ENCODE measurements at regions of chr2 and their contacts with region 1.

Region 1: GRCh38 chr2:96138179-96139145 is at the start of gene ASTL:
- DNase-seq: peak; percentile 57
- H3K4me3 ChIP-seq: no peak within 1 kb of the TSS
- H3K27ac ChIP-seq: no peak within 1 kb of the TSS
- H3K4me1 ChIP-seq: no peaks in the 10 kb centered on the region
- H3K27me3 ChIP-seq: no peaks in the 10 kb centered on the region
- CTCF ChIP-seq: peak; percentile 68
- total RNA-seq, gene ASTL: not detected in 2 replicates

Region 2: DNA sequence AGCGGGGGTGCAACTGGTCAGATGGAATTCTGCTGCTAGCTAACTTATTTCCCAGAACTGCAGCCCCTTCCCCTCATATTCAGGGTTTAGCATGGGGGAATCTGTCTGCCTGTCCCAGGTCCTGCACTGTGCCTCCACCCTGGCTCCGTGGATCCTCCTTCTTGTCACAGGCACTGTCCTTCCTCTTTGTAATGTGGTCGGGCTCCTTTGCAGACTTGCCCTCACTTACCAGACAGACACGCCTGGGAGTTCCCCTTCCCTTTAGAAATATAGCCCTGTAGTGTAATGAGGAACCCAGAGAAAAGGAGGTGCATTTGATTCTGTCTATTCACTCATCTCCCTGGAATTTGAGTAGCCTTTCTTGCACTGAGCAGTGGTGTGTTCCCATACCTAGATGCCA is 437.9 kb before region 1 on chr2:
- CTCF ChIA-PET with region 1: no interaction called
- POLR2A ChIA-PET with region 1: no interaction called
- intact Hi-C with region 1: no loop called
- DNase-seq: no peak
- H3K4me3 ChIP-seq: no peak overlapping the region
- H3K27ac ChIP-seq: no peak overlapping the region
- H3K4me1 ChIP-seq: no peaks in the 10 kb centered on the region
- H3K27me3 ChIP-seq: peaks cover 31% of the 10 kb centered on the region
- CTCF ChIP-seq: no peak

Region 3: DNA sequence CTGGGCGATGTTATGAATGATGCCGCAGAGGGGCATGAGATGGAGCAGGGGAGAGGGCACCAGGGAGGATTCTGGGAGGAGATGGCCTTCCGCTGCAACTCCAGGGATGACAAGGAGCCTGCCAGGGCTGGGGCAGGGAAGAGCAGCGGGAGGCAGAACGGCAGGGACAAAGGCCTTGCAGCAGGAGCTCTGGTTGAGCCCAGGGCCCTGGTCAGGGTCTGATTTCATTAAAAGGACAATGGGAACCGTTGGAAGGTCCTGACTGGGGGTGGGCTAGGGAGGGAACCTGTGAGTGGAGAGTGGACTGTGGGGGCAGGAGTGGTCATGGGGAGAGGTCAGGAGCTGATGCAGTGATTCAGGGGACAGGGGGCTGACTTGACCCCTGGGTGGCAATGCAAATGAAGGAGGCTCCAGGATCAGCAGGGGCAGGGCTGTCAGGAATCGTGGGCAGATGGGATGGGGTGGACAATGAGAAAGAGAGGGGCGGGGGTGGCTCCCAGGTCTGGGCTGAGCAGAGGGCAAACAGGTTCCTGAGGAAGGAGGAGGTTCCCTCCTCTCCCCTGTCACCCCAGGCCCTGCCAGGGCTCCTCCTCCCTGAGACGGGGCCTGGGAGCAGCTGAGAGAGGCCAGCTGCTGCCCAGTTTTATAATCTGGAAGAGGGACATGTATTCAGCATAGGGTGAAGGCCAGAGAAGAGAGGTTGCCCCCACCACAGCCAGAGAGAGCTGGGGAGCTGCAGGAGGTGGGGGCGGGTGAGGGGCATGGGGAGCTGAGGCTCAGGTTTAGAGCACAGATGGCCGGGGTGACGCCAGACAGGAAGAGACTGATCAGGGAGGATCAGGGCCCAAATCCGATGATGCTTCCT is 14.1 kb after region 1 on chr2:
- CTCF ChIA-PET with region 1: interaction called, 10 read pairs
- POLR2A ChIA-PET with region 1: no interaction called
- intact Hi-C with region 1: no loop called
- DNase-seq: no peak
- H3K4me3 ChIP-seq: no peak overlapping the region
- H3K27ac ChIP-seq: no peak overlapping the region
- H3K4me1 ChIP-seq: peaks cover 17% of the 10 kb centered on the region
- H3K27me3 ChIP-seq: no peaks in the 10 kb centered on the region
- CTCF ChIP-seq: no peak

Region 4: GRCh38 chr2:96174251-96175144 is 36.0 kb after region 1 on chr2:
- CTCF ChIA-PET with region 1: interaction called, 47 read pairs
- POLR2A ChIA-PET with region 1: no interaction called
- intact Hi-C with region 1: loop called (anchors 1 kb)
- DNase-seq: peak; percentile 78
- H3K4me3 ChIP-seq: no peak overlapping the region
- H3K27ac ChIP-seq: no peak overlapping the region
- H3K4me1 ChIP-seq: peaks cover under 1% of the 10 kb centered on the region
- H3K27me3 ChIP-seq: no peaks in the 10 kb centered on the region
- CTCF ChIP-seq: peak; percentile 91

Measured in A673 (cell line).